ENCODE measurements at regions of chr2 and their contacts with region 1.

Region 1: GRCh38 chr2:230326453-230327417 is at the start of gene SP140L:
- DNase-seq: peak; percentile 93
- ATAC-seq: peak; percentile 99
- H3K4me3 Mint-ChIP-seq: peak within 1 kb of the TSS; percentile 97
- H3K27ac Mint-ChIP-seq: peak within 1 kb of the TSS; percentile 96
- H3K4me1 Mint-ChIP-seq: peaks cover 63% of the 10 kb centered on the region
- H3K27me3 Mint-ChIP-seq: no peaks in the 10 kb centered on the region
- total RNA-seq, gene SP140L: 61.4 to 84.4 TPM

Region 2: GRCh38 chr2:230305416-230306275 is 21.1 kb before region 1 on chr2:
- CTCF ChIA-PET with region 1: no interaction called
- DNase-seq: no peak
- ATAC-seq: no peak
- H3K4me3 Mint-ChIP-seq: no peak overlapping the region
- H3K27ac Mint-ChIP-seq: no peak overlapping the region
- H3K4me1 Mint-ChIP-seq: no peaks in the 10 kb centered on the region
- H3K27me3 Mint-ChIP-seq: no peaks in the 10 kb centered on the region

Region 3: DNA sequence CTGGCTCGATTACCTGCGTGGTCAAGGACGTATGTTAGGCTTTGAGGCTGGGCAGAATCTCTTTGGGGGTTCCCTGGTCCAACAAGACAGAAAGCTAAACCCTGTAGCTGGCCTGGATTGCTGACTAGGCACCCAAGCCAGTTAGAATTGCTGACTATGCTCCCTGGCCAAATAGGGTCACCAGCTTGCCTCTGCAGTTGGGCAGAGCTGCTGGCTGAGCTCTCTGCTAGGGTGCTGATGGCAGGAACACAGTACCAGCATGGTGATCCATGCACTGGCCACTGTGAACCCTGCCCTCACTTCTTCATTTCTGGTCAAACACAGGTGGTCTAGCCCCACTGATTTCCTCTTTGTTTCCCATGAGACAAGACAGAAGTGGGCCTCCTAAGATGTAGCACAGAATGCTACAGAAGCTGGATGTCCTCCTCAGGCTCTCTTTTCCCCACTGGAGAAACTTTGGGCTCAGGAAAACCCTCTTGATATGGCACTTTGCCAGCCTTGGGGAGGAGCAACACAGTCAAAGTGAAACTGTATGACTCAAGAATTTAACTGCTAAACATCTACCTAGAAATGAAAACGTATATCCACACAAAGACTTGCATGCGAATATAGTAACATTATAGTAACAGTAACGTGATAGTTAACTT is 21.0 kb after region 1 on chr2:
- CTCF ChIA-PET with region 1: interaction called, 12 read pairs
- DNase-seq: peak; percentile 71
- ATAC-seq: peak; percentile 79
- H3K4me3 Mint-ChIP-seq: peak overlapping the region; percentile 66
- H3K27ac Mint-ChIP-seq: peak overlapping the region; percentile 96
- H3K4me1 Mint-ChIP-seq: peaks cover 72% of the 10 kb centered on the region
- H3K27me3 Mint-ChIP-seq: no peaks in the 10 kb centered on the region

Region 4: DNA sequence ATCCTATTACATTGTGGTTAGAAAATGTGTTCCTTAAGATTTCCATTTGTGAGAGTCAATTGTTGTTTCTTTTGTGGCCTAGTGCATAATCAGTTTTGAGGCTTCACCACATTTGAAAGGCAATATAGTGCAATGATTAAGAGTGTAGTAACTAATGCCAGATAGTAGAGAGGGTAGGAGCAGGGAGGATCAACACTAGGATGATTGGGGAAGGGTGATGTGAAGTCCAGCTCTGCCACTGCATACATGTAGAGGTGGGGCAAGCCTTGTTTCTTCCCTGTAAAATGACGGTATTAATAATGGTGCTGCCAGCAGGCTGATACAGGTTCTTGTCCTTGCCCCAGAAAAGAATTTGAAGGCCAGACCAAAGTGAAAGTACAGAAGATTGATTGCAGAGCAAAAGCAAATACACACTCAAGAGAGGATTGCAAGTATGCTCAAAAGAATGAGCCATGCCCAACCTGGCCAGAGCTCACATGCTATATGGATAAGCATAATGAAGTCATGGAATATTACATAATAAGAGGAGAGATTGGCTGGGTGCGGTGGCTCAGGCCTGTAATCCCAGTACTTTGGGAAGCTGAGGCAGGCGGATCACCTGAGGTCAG is 97.2 kb after region 1 on chr2:
- CTCF ChIA-PET with region 1: no interaction called
- DNase-seq: no peak
- ATAC-seq: peak; percentile 24
- H3K4me3 Mint-ChIP-seq: peak overlapping the region; percentile 4
- H3K27ac Mint-ChIP-seq: no peak overlapping the region
- H3K4me1 Mint-ChIP-seq: peaks cover 83% of the 10 kb centered on the region
- H3K27me3 Mint-ChIP-seq: no peaks in the 10 kb centered on the region

Measured in activated CD8-positive, alpha-beta memory T cell treated with anti-CD3 and anti-CD28 coated beads, Interleukin-2, amount 10 ng/mL, durations not matched to agents 7 days and 5 days (primary cell).